AG04449 (cell line): ENCODE measurements at regions of chr7 and their contacts with region 1.

Region 1: DNA sequence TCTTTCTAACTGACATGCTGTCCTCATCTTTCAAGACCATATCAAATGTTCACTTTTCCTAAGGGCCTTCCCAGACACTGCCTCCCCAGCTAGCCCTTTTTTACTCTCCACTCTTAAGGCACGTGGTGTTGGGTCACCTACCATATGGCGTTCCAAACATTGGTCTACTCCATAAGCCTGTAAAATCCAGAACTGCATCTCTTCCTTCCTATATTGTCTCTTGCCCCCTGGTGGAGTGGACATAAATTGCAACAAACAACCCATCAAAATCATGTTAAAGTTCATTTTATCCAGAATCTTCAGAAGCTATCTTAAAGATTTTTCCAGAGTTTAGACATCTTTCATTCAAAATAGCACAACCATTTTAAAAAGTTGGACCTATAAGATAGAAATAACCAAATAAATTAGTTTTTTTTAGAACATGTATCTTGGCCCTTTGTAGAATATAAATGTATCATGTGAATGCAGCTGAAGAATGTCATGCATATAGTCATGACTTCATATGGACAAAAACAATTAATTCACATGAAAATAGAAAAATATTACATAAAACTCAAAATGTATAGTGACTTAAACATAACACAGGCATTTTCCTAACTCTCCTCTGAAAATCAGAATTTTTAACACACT is 180.6 kb upstream of the CHRM2 start:
- DNase-seq: no peak
- H3K4me3 ChIP-seq: no peak overlapping the region
- CTCF ChIP-seq: peak; percentile 31

Region 2: GRCh38 chr7:136405931-136406777 is 281.7 kb before region 1 on chr7:
- CTCF ChIA-PET with region 1: interaction called, 22 read pairs
- POLR2A ChIA-PET with region 1: no interaction called
- DNase-seq: no peak
- H3K4me3 ChIP-seq: no peak overlapping the region
- CTCF ChIP-seq: peak; percentile 59

Region 3: DNA sequence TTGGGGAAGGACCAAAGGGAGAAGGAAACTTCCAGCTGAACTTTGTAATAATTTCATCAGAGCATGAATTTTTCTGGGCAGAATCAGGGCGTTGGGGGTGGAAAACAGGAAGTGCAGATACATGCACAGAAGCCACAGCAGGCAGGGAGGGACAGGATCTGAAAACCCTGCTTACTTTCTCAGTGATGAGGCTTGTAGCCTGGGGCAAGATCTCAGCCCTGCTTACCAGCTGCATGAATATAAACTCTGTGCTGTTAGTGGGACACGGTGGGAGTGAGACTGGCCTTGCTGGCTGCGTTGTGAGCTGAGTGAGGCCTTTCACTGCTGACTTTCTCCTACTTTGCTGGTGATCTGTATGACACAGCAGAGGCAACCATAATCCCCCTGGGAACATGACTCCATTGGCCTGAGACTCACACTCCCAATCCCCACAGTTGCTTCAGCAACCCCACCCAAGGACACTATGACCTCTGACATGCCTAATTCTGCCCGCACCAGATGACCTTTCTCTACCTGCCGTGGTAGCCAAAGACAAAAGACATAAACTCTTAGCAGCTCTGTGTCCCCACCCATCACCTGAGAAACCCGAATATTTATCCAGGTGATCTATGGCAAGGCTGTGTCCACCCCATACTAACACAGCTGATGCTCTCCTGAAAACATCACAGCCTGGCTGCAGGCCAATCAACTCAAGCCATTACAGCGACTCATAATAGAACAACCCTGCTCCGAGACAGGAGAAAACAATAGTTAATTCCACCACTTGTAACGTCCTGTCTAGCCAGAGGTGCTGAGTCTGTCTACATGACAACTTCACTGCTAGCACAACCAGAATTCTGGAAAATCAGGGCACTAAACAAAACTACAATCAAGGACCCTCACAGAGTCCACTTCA is 10.1 kb before region 1 on chr7:
- CTCF ChIA-PET with region 1: interaction called, 21 read pairs
- POLR2A ChIA-PET with region 1: no interaction called
- DNase-seq: no peak
- H3K4me3 ChIP-seq: no peak overlapping the region
- CTCF ChIP-seq: no peak

Region 4: GRCh38 chr7:137276189-137276588 is 588.4 kb after region 1 on chr7:
- CTCF ChIA-PET with region 1: no interaction called
- POLR2A ChIA-PET with region 1: no interaction called
- DNase-seq: no peak
- H3K4me3 ChIP-seq: no peak overlapping the region
- CTCF ChIP-seq: no peak